ENCODE measurements at regions of chr9 and their contacts with region 1.

Region 1: DNA sequence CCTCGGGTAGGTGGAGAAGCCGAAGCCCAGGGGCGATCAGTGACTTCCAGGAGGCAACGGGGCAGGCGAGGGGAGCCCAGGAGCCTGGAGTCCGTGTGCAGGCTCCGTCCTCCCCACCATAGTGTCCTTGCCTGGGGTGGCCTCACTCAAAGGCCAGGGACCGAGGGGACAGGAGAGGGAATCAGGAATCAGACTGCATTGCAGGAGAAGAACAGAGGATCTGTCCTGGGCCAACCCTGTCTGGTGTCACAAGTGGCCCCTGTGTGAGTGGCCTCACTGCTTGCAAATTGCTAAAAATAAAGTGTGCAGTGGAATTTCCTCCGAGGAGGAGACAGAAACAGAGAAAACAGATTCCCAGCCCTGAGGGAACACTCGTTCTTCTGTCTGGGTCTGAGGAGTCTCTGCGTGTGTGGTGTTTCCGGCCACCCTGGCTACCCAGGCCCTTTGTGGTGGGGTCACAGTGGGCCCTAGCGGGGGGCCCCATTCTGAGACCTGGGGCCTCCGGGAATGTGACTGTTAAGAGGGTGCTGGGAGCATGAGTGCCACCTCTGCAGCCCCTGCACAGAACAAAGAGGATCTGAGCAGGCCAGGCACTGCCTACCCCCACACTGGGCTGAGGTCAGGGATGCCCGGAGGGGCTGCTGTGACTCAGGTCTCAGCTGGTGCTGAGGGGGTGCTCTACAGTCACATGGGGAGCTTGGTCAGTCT is 7.5 kb downstream of the TRAF1 start:
- DNase-seq: no peak
- ATAC-seq: peak; percentile 33

Region 2: GRCh38 chr9:120894321-120895148 is 24.6 kb before region 1 on chr9:
- intact Hi-C with region 1: loop called (anchors 2 kb)
- DNase-seq: peak; percentile 79
- ATAC-seq: peak; percentile 84

Measured in Right ventricle myocardium inferior (tissue), 1 donor.